Activated T-helper 2 cell treated with anti-CD3 and anti-CD28 coated beads, Interferon-gamma antibody, Interleukin-2, Interleukin-4, amounts not matched to agents 10 μg/mL and 5 μg/mL and 100 μg/mL, durations not matched to agents 14 hours and 24 hours and 36 hours (primary cell): ENCODE measurements at regions of chr1 and their contacts with region 1.

Region 1: GRCh38 chr1:101238681-101239094 is 1.9 kb downstream of the S1PR1 start:
- DNase-seq: peak; percentile 80
- H3K4me3 Mint-ChIP-seq: peak overlapping the region; percentile 99
- H3K27ac Mint-ChIP-seq: peak overlapping the region; percentile 96
- H3K4me1 Mint-ChIP-seq: peaks cover 61% of the 10 kb centered on the region
- H3K27me3 Mint-ChIP-seq: no peaks in the 10 kb centered on the region

Region 2: DNA sequence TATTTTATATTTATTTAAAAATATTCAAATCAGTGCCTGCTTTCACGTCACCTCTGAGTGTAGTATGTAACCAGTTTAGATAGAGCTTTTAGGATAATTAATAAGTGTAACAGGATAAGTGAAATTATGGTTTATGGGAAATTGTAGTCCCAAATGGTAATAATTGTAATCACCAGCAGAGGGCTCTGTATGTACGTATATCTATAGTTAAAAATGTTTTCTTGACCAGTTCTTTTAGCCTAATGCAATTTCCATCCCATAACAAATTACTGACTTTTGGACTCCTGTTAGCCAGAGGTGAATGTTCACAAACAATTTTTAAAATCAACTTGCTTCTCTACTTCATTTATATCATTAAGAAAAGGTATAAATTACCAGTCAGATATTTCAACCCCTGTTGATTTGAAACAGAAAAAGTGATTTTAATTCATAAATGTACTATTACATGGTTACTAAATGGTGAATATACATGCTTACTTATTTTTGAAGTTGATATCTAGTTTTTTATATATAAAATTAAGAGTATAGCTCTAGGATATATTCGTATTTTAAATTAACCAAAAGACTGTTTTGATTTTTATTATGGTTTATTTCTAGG is 317.5 kb before region 1 on chr1:
- intact Hi-C with region 1: loop called (anchors 1 kb)
- DNase-seq: no peak
- H3K4me3 Mint-ChIP-seq: no peak overlapping the region
- H3K27ac Mint-ChIP-seq: no peak overlapping the region
- H3K4me1 Mint-ChIP-seq: peaks cover 32% of the 10 kb centered on the region
- H3K27me3 Mint-ChIP-seq: no peaks in the 10 kb centered on the region

Region 3: DNA sequence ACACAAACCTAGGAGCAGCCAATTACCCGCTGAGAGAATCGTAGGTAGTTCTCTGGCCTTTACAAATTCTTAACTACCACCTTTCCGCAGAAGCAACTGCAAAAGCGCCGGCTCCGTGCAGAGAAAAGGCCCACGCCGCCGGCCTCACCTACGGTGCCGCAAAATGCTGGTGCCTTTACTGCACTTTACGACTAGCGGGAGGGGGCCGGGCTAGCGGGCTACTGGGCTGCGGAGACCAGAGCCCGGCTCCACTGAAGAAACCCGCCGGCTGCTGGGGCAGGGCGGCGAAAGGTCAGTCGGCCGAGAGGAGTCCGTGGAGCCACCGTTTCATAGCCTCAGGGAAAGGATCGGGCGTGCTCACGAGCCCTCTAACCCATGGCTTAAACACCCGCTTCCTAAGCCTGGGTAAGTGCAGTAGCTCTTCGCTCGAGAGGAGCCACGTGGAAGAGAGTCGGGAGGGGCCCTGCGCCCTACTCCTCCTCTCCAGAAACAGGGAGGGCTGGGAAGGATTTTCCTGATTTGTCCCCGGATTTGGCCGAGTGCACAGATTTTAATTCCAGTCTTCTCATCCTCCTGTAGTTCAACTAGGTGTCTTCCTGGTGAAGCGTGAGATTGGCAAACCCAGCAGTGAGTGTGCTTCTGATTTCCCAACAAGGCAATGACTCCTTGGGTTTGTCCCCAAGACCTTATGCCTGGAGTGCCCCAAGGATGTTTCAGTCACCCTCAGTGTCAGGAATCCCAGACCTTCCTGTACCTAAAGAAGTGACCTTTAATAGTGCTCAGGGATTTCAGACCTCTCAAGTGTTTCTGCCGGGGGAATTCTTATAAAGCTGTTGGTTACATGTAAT is 212.8 kb before region 1 on chr1 and contains the start of gene DPH5:
- intact Hi-C with region 1: loop called (anchors 2 kb)
- DNase-seq: peak; percentile 85
- H3K4me3 Mint-ChIP-seq: peak within 1 kb of the TSS; percentile 99
- H3K27ac Mint-ChIP-seq: peak within 1 kb of the TSS; percentile 94
- H3K4me1 Mint-ChIP-seq: peaks cover 51% of the 10 kb centered on the region
- H3K27me3 Mint-ChIP-seq: no peaks in the 10 kb centered on the region
- total RNA-seq, gene DPH5: 33.5 and 40.0 TPM in 2 replicates

Region 4: GRCh38 chr1:101088431-101088830 is 150.3 kb before region 1 on chr1:
- intact Hi-C with region 1: loop called (anchors 2 kb)
- DNase-seq: no peak
- H3K4me3 Mint-ChIP-seq: no peak overlapping the region
- H3K27ac Mint-ChIP-seq: no peak overlapping the region
- H3K4me1 Mint-ChIP-seq: peaks cover 63% of the 10 kb centered on the region
- H3K27me3 Mint-ChIP-seq: no peaks in the 10 kb centered on the region

Region 5: DNA sequence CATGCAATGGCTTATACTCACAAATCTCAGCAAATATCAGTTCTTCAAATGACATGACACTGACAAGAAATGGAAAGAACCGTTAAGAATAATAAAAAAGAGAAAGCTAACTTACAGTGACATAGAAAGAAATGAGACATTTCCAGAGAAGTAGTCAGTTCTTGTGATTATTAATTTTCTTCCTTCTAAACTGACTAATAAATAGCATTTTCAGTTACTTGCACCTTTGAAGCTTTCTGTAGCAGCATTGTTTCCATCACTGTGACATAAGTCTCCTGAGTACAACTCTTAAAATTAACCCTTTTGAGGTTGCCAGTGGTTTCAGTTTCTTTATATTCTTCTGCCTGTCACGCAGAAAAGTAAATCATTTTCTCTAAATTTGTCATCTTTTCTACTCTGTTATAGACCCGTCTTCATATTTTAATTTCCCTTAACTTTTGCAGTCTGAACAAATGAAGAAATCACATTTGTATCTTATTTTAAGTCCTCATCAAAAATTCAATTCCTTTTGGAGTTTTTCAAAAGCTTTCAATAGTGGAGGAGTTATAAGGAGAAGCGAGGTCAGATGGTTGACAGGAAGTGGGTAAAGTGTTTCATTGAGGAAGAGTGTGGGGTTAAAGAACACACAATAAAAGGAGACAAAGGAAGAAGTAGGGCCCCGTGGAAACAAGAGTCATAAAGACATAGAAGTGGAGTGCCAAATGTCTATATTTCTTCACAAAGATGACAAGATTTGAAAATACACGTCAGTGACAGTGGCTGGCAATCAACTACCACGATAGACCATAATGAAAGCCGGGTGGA is 59.8 kb before region 1 on chr1:
- intact Hi-C with region 1: loop called (anchors 1 kb)
- DNase-seq: peak; percentile 29
- H3K4me3 Mint-ChIP-seq: peak overlapping the region; percentile 81
- H3K27ac Mint-ChIP-seq: peak overlapping the region; percentile 100
- H3K4me1 Mint-ChIP-seq: peaks cover 71% of the 10 kb centered on the region
- H3K27me3 Mint-ChIP-seq: no peaks in the 10 kb centered on the region

Region 6: DNA sequence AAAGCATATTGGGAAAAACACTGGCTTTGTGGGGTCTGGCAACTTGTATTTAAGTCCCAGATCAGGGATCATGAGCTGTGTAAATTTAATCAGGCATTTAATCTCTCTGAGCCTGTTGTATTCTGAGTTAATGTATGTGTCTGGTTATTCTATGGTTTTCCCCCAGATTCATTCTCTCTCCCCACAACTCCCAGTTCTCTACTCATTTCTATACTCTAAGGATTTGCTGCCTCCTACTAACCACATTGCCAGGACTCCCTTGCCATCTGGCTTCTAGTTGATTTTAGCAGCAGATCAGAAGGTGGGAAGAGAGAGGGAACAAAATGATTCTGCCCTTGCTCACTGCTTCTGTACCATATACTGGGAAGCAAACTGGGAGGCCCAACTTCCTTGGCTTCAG is 33.2 kb before region 1 on chr1:
- intact Hi-C with region 1: loop called (anchors 1 kb)
- DNase-seq: no peak
- H3K4me3 Mint-ChIP-seq: no peak overlapping the region
- H3K27ac Mint-ChIP-seq: no peak overlapping the region
- H3K4me1 Mint-ChIP-seq: peaks cover 36% of the 10 kb centered on the region
- H3K27me3 Mint-ChIP-seq: no peaks in the 10 kb centered on the region

Region 7: DNA sequence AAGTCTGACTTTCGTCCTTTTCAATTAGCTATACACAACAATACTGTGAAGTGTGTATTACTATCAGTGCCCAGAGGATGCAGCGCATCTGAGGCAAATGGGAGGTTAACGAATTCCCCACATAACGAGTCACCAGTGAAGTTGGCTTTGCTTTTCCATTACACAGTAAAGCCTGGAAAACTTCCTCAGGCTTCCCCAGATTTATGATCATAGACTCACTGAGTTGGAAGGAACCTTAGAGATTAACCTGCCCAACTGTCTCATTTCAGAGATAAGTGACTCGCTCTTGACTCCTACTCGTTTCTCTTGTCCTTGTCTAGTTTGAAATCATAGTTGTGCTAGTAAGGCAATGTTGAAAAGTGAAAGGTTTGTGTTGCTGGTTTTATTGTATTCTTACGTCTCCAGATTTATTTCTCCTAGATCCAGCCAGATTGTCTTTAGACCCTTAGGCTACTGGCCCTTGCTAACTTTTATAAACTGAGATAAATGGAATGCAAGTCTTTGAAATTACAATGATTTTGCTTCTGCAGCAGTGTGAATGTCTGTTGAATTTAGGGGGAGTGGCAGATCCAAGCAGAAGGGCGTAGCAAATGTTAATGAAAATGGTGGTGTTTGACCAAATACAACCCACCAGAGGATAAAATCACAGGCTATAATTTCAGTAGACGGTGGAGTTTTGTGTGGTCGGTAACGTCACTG is 15.4 kb after region 1 on chr1:
- intact Hi-C with region 1: loop called (anchors 1 kb)
- DNase-seq: no peak
- H3K4me3 Mint-ChIP-seq: no peak overlapping the region
- H3K27ac Mint-ChIP-seq: peak overlapping the region; percentile 62
- H3K4me1 Mint-ChIP-seq: peaks cover 29% of the 10 kb centered on the region
- H3K27me3 Mint-ChIP-seq: no peaks in the 10 kb centered on the region